ENCODE measurements at regions of chr10 and their contacts with region 1.

Region 1: DNA sequence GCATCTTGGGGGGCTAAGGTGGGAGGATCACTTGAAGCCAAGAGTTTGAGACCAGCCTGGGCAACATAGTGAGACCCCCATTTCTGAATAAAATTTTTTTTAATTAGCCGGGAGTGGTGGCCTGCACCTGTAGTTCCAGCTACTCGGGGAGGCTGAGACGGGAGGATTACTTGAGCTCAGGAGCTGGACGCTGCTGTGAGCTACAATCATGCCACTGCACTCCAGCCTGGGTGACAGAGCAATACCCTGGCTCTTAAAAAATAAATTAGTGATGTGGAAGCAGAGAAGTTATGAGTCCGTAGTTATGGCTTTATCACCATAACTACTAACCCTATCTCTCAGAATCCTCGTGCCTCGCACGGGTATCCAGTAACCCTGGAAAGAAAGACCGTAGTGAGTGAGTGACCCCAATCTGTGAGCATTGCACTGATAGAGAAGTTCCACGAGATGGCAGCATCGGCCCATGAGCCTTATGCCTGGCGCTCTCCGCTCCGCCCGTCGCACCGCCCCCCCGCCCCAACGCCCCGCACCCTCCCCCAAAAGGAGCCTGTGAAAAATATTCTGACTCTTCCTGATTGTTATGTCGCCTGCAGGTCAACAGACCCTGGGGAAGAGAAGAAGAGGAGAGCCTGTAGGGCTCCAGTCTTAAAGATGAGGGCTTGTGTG is 4.9 kb upstream of the SLC29A3 start:
- DNase-seq: peak; percentile 42 to 85
- ATAC-seq: peak; percentile 43 to 58 (median 47)
- H3K4me3 ChIP-seq: no peak overlapping the region
- H3K4me3 Mint-ChIP-seq: no peak overlapping the region
- H3K27ac ChIP-seq: no peak overlapping the region
- H3K27ac Mint-ChIP-seq: no peak overlapping the region
- H3K4me1 ChIP-seq: peaks cover 10% of the 10 kb centered on the region
- H3K4me1 Mint-ChIP-seq: peaks cover 5 to 11% of the 10 kb centered on the region in 2 donors
- H3K27me3 ChIP-seq: no peaks in the 10 kb centered on the region
- H3K27me3 Mint-ChIP-seq: peaks cover 18 to 19% of the 10 kb centered on the region in 2 donors
- CTCF ChIP-seq: peak; percentile 81

Region 2: DNA sequence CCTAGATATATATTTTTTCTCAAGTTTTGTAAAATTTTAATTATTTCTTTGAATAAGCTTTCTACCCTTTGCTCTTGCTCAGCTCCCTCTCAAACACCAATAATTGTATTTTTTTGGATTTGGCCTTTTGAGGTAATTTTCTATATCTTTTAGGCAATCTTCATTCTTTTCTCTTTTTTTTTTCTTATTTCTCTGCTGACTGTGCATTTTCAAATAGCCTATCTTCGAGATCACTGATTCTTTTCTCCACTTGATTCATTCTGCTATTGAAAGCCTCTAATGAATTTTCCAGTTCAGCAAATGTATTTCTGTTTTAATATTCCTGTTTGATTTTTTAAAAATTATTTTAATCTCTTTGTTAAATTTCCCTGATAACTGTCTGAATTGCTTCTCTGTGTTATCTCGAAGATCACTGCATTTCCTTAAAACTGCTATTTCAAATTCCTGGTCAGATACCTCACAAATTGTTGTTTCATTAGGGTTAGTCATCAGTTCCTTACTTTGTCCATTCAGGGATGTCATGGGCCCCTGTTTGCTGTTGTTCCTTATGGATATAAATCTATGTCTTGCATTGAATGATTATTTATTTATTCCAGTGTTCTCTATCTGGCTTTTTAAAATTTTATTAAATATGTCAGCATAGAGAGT is 201.9 kb before region 1 on chr10:
- intact Hi-C with region 1: no loop called
- DNase-seq: no peak
- ATAC-seq: no peak
- H3K4me3 ChIP-seq: no peak overlapping the region
- H3K4me3 Mint-ChIP-seq: no peak overlapping the region
- H3K27ac ChIP-seq: no peak overlapping the region
- H3K27ac Mint-ChIP-seq: no peak overlapping the region
- H3K4me1 ChIP-seq: no peaks in the 10 kb centered on the region
- H3K4me1 Mint-ChIP-seq: no peaks in the 10 kb centered on the region
- H3K27me3 ChIP-seq: peaks cover 4% of the 10 kb centered on the region
- H3K27me3 Mint-ChIP-seq: peaks cover 28 to 62% of the 10 kb centered on the region in 2 donors
- CTCF ChIP-seq: no peak

Region 3: DNA sequence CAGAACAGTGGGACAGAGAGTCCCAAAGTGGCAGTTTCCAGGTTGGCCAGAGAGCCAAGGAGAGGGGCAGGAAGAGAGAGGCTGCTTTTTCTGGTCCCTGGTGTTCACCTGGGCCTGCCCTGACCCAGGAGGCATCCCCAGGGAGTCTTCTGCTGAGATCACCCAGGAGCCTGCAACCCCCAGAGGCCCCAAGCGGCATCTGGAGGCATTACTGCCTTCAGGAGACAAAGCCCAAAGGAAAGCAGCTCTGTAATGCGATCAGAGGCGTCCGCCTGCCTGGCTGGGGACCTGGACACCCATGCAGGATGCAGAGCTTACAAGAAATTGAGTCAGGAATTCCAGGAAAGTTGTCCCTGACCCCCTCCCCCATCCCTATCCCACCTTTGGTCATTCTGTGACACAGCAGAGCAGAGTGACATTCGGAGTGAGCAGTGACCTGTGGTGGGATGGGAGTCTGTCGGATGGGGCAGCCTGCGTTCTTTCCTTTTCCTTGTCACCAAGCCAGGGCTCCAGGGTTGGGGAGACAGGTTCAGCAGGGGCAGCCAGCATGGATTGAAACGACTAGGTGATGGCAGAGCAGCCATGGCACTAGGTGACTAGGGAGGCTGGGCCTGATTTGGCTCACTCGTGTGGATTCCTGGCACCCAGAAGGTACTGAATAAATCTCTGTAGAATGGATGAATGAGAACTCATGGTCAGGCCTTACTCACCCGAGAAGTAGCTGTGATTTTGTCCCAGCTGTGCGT is 91.4 kb before region 1 on chr10:
- intact Hi-C with region 1: no loop called
- DNase-seq: no peak
- ATAC-seq: no peak
- H3K4me3 ChIP-seq: no peak overlapping the region
- H3K4me3 Mint-ChIP-seq: no peak overlapping the region
- H3K27ac ChIP-seq: no peak overlapping the region
- H3K27ac Mint-ChIP-seq: no peak overlapping the region
- H3K4me1 ChIP-seq: peaks cover 2% of the 10 kb centered on the region
- H3K4me1 Mint-ChIP-seq: peaks cover 0 to 5% of the 10 kb centered on the region in 2 donors
- H3K27me3 ChIP-seq: no peaks in the 10 kb centered on the region
- H3K27me3 Mint-ChIP-seq: peaks cover 4 to 10% of the 10 kb centered on the region in 2 donors
- CTCF ChIP-seq: no peak

Region 4: GRCh38 chr10:71569775-71570588 is 255.8 kb after region 1 on chr10:
- intact Hi-C with region 1: loop called (anchors 1 kb)
- DNase-seq: peak; percentile 69 to 82
- ATAC-seq: peak; percentile 58 to 75 (median 66)
- H3K4me3 ChIP-seq: no peak overlapping the region
- H3K4me3 Mint-ChIP-seq: no peak overlapping the region
- H3K27ac ChIP-seq: no peak overlapping the region
- H3K27ac Mint-ChIP-seq: no peak overlapping the region
- H3K4me1 ChIP-seq: no peaks in the 10 kb centered on the region
- H3K4me1 Mint-ChIP-seq: no peaks in the 10 kb centered on the region
- H3K27me3 ChIP-seq: no peaks in the 10 kb centered on the region
- H3K27me3 Mint-ChIP-seq: no peaks in the 10 kb centered on the region
- CTCF ChIP-seq: peak; percentile 77

Region 5: DNA sequence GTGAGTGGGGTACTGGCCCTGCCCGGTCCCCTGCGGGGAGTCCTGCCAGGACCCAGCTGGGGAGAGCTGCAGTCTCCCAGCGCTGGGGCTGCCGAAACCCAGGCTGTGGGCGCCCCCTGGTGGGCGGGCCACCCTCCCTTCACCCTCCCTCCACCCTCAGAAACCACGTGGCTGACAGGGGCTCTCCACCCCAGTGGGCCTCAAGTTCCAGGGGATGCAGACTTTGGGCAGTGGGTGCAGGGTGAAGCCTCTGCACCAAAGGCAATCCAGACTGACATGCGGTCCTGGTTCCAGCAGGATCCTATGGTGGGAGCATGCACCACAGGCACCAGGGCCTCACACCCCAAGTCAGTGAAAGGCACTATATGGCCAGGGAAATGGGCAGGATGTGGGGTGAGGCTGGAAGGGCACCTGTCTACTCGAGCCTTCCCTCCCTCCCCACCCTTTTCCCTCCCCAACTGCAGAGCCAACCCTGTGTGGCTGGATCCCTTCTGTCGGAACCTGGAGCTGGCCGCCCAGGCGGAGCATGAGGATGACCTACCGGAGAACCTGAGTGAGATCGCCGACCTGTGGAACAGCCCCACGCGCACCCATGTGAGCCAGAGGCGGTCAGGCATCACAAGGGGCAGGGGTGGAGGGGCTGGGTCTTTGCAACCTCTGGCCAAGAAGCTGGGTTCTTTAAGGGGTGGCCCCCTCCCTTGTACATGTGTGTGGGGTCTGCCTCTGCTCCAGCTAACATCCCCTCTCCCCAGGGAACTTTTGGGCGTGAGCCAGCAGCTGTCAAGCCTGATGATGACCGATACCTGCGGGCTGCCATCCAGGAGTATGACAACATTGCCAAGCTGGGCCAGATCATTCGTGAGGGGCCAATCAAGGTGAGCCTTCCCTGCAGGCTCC is 498.1 kb after region 1 on chr10:
- intact Hi-C with region 1: loop called (anchors 1 kb)
- DNase-seq: peak; percentile 75 to 88
- ATAC-seq: peak; percentile 86 to 96 (median 96)
- H3K4me3 ChIP-seq: no peak overlapping the region
- H3K4me3 Mint-ChIP-seq: no peak overlapping the region
- H3K27ac ChIP-seq: no peak overlapping the region
- H3K27ac Mint-ChIP-seq: no peak overlapping the region
- H3K4me1 ChIP-seq: peaks cover 10% of the 10 kb centered on the region
- H3K4me1 Mint-ChIP-seq: no peaks in the 10 kb centered on the region
- H3K27me3 ChIP-seq: no peaks in the 10 kb centered on the region
- H3K27me3 Mint-ChIP-seq: peaks cover 0 to 5% of the 10 kb centered on the region in 2 donors
- CTCF ChIP-seq: peak; percentile 78

Region 6: DNA sequence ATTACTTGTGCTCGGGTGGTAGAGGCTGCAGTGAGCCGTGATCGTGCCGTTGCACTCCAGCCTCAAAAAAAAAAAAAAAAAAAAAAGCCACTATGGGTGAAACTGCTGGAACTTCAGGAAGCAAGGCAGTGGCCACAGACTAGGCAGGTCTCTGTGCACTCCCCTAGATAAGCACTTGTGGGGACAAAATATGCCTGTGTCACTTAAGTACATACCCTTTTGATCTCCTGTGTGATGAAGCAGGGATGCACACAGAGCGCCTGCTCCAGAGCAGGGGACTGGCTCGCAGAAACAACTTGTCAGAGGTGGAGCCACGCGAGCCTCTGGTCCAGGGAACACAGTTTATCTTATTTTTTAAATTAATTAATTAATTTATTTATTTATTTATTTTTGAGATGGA is 579.8 kb after region 1 on chr10:
- intact Hi-C with region 1: loop called (anchors 2 kb)
- DNase-seq: no peak
- ATAC-seq: no peak
- H3K4me3 ChIP-seq: no peak overlapping the region
- H3K4me3 Mint-ChIP-seq: no peak overlapping the region
- H3K27ac ChIP-seq: no peak overlapping the region
- H3K27ac Mint-ChIP-seq: no peak overlapping the region
- H3K4me1 ChIP-seq: peaks cover 24% of the 10 kb centered on the region
- H3K4me1 Mint-ChIP-seq: peaks cover 6% of the 10 kb centered on the region in 2 donors
- H3K27me3 ChIP-seq: peaks cover 4% of the 10 kb centered on the region
- H3K27me3 Mint-ChIP-seq: peaks cover 5 to 7% of the 10 kb centered on the region in 2 donors
- CTCF ChIP-seq: no peak

Measured in natural killer cell (primary cell).